GM10248 (cell line): ENCODE measurements at regions of chr2 and their contacts with region 1.

Region 1: GRCh38 chr2:237744613-237745249 is 53.8 kb upstream of the RBM44 start:
- DNase-seq: peak; percentile 84
- CTCF ChIP-seq: peak; percentile 96

Region 2: GRCh38 chr2:237132799-237133198 is 611.9 kb before region 1 on chr2:
- CTCF ChIA-PET with region 1: no interaction called
- POLR2A ChIA-PET with region 1: no interaction called
- DNase-seq: no peak
- CTCF ChIP-seq: peak; percentile 35

Region 3: DNA sequence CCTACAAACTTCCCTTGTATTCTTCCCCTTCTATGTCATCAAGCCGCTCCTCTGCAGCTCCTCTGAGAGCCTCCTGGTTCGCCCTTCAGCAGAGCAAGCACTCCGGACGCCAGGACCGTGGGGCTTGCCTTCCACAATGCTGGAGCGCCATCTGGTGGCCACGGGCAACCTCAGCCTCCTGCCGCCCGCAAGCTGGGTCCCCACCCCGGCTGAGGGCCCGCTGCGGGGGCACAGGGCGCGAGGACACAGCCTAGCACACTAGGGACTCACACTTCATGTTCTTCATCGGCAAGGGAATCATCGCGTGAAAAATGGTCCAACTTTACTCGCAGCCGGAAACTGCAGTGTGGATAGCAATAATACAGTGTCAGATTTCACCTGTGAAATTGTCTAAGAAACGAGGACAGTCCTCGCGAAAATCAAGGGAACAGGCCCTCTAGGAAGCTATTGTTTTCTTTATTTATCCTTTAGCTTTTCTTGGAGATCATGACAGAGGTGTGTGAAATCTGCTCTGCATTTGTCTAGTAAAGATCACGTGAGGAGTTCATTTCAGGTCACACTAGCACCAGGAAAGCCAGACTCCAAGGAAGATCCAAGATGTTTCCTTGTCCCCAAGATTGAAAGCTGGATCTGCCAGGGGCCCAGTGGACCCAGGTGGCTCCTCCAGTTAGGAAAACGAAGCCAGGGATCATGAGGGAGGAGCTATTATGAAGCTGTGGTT is 172.6 kb before region 1 on chr2:
- CTCF ChIA-PET with region 1: interaction called, 22 read pairs
- POLR2A ChIA-PET with region 1: no interaction called
- DNase-seq: peak; percentile 95
- CTCF ChIP-seq: peak; percentile 90

Region 4: GRCh38 chr2:237674731-237675276 is 69.9 kb before region 1 on chr2:
- CTCF ChIA-PET with region 1: interaction called, 212 read pairs
- POLR2A ChIA-PET with region 1: no interaction called
- DNase-seq: peak; percentile 83
- CTCF ChIP-seq: no peak

Region 5: DNA sequence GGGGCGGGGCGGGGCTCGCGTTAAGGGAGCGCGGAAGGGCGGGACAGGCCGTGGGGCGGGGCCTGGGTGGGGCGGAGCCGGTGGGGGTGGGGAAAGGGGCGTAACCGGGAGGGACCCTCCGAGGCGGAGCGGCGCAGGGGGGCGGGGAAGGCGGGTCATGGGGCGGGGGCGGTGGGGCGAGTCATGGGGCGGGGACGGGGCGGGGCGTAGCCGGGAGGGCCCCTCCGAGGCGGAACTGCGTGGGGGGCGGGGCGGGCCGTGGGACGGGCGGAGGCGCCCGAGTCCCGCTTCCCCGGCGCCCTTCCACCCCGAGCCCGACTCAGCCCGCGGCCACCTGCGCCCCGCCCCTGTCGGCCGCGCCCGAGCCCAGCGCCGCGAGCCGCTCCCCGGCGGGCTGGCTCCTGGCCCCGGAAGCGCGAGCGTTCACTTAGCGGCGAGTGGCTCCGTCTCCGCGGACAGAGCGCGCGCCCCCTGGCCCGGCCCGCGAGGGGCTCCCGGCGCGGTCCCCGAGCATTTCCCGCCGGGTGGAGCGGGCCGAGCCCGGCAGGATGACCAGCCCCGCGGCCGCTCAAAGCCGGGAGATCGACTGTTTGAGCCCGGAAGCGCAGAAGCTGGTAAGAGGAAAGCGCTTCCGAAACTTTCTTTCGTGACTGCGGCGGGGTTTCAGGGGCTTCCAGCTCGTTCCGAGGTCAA is 52.7 kb before region 1 on chr2:
- CTCF ChIA-PET with region 1: interaction called, 32 read pairs
- POLR2A ChIA-PET with region 1: no interaction called
- DNase-seq: peak; percentile 96
- CTCF ChIP-seq: no peak

Region 6: DNA sequence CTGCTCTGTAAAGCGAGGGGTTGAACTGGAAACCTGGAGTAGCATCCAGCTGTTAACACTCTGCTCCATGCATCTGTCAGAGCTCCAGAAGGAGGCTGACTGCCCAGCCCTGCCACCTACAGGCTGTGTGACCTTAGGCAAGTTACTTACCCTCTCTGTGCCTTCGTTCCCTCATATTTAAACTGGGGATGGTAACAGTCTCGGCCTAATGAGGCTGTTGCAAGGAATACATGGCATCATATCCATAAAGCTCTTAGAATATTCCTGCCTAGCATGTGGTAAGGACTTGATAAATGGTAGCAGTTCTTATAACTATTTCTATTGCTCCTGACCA is 36.7 kb before region 1 on chr2:
- CTCF ChIA-PET with region 1: interaction called, 27 read pairs
- POLR2A ChIA-PET with region 1: no interaction called
- DNase-seq: no peak
- CTCF ChIP-seq: no peak

Region 7: DNA sequence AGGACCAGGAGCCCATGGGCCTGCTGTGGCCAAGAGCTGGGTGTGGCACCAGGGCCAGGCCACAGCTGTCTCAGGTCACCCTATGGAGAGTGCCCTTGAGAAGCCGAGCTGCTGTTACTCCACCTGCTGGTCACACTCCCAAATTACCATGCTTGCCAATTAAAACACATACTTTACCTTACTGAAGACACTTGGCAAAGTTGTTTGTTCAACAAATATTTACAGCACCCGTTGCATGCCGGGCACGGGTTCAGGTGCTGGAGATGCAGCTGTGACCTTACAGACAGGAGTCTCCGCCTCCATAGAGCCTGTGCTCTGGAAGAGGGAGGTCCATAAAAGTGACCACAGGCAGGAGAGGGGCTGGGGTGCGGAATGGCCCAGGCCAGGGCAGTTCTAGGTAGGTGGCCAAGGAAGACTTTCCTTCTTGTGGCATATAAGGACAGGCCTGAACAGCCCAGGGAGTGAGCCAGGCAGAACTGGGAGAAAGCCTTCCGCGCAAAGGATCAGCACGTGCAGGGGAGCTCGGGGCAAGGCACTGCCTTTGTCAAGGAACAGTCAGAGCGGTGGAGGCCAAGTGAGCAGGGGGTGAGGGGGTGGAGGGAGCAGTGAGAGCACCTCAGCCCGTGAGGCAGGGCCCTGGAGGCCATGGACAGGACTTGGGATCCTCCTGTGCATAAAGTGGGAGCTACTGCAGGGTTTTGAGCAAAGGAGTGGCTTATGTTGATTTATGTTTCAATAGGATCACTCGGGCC is 30.2 kb after region 1 on chr2:
- CTCF ChIA-PET with region 1: interaction called, 10 read pairs
- POLR2A ChIA-PET with region 1: no interaction called
- DNase-seq: peak; percentile 69
- CTCF ChIP-seq: peak; percentile 49